ENCODE measurements at regions of chr2 and their contacts with region 1.

Region 1: GRCh38 chr2:8219631-8220355 is 462.1 kb upstream of the ID2 start:
- DNase-seq: no peak
- H3K4me3 ChIP-seq: no peak overlapping the region
- H3K27ac ChIP-seq: no peak overlapping the region
- H3K4me1 ChIP-seq: no peaks in the 10 kb centered on the region
- H3K27me3 ChIP-seq: no peaks in the 10 kb centered on the region
- CTCF ChIP-seq: no peak
- EP300 ChIP-seq: no peak
- RAD21 ChIP-seq: no peak

Region 2: GRCh38 chr2:8152392-8153257 is 67.2 kb before region 1 on chr2:
- CTCF ChIA-PET with region 1: no interaction called
- POLR2A ChIA-PET with region 1: no interaction called
- DNase-seq: no peak
- H3K4me3 ChIP-seq: no peak overlapping the region
- H3K27ac ChIP-seq: no peak overlapping the region
- H3K4me1 ChIP-seq: peaks cover 4 to 21% of the 10 kb centered on the region in 2 experiments; a peak in 2 of 4 replicates
- H3K27me3 ChIP-seq: no peaks in the 10 kb centered on the region
- CTCF ChIP-seq: no peak
- EP300 ChIP-seq: no peak
- RAD21 ChIP-seq: no peak

Region 3: GRCh38 chr2:8239531-8240088 is 19.8 kb after region 1 on chr2:
- CTCF ChIA-PET with region 1: interaction called, 10 read pairs
- POLR2A ChIA-PET with region 1: no interaction called
- DNase-seq: no peak
- H3K4me3 ChIP-seq: no peak overlapping the region
- H3K27ac ChIP-seq: no peak overlapping the region
- H3K4me1 ChIP-seq: no peaks in the 10 kb centered on the region
- H3K27me3 ChIP-seq: no peaks in the 10 kb centered on the region
- CTCF ChIP-seq: no peak
- EP300 ChIP-seq: no peak
- RAD21 ChIP-seq: no peak